ENCODE measurements at regions of chr4 and their contacts with region 1.

Region 1: DNA sequence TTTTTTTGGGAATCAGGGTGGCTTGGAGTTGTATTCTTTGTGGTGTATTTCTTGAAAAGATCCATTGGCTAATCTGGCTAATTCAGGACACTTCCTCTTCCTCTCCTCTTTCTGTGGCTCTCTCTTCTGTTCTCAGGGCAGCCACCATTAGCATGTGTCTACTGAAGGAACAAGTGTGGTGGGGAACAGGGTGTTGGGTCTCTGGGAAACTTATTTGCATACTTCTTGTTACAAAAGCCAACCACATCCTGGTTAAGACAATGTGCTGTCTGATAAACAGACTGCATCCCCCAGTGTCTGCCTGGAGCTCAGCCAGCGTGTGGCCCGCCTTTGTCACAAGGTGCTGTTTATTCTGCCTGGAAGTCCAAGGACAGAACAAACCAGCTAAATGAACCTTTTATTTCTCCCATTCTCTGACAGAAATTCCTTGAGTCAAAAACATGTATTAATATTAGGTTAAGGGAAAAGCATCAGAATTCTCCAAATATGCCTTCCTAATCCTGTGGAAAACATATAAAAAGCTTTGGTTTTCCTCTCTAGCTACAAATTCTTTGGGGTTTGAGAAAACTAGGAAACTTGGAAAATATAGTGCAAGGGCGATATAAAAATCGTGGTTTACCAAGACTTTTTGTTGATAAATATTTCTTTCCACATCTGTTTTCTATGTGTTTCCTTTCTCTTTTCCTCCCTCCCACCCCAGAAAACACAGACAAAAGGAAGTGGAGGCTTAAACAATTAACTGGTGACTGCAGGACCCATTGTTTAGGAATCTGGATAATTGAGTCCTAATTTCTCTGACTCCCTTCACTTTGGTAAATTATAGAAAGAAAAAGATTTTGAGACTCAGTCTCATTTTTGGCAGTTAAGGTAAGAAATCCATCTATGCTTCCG is 203.6 kb downstream of the SPRY1 start:
- DNase-seq: peak; percentile 10 to 83
- H3K4me3 ChIP-seq: no peak overlapping the region
- H3K27ac ChIP-seq: peak overlapping the region in 1 of 2 donors; percentile 42
- H3K4me1 ChIP-seq: no peaks in the 10 kb centered on the region
- H3K27me3 ChIP-seq: no peaks in the 10 kb centered on the region
- CTCF ChIP-seq: no peak

Region 2: GRCh38 chr4:123564758-123565346 is 35.3 kb before region 1 on chr4:
- intact Hi-C with region 1: loop called (anchors 5 kb)
- DNase-seq: no peak
- H3K4me3 ChIP-seq: no peak overlapping the region
- H3K27ac ChIP-seq: no peak overlapping the region
- H3K4me1 ChIP-seq: peaks cover 0 to 10% of the 10 kb centered on the region in 2 donors
- H3K27me3 ChIP-seq: no peaks in the 10 kb centered on the region
- CTCF ChIP-seq: peak; percentile 49 to 69 (median 66)

Measured in ascending aorta (tissue), 2 donors.